ENCODE measurements at regions of chr2 and their contacts with region 1.

Region 1: DNA sequence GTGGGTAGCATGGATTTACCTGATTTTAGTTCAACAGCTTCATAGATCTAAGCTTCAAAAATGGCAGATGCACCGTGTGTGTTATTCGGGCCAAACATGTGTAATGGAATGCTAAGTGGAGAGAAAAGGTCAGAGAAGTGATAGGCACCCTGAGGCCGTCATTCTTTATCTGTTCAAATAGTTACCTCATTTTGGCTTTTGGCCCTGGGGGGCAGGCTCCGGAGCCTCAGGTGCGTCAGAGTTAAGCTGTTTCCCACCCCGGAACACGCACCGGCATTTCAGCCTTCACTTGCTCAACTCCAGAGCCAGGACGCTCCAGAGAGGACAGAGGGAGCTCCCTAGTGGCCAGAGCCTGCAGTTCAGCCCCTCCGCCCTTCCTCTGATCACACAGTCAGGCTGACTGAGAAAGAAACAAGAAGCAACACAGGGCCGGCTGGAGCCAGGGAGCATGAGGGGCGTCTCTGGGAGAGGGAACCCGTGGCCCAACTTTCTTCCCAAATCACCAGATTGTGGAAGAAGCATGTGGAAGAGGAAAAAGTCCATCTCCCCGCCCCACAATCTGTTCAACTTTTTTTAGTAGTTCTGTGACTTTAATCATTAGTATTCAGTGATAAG is 135.2 kb upstream of the EPC2 start:
- DNase-seq: peak; percentile 85
- ATAC-seq: peak; percentile 99

Region 2: DNA sequence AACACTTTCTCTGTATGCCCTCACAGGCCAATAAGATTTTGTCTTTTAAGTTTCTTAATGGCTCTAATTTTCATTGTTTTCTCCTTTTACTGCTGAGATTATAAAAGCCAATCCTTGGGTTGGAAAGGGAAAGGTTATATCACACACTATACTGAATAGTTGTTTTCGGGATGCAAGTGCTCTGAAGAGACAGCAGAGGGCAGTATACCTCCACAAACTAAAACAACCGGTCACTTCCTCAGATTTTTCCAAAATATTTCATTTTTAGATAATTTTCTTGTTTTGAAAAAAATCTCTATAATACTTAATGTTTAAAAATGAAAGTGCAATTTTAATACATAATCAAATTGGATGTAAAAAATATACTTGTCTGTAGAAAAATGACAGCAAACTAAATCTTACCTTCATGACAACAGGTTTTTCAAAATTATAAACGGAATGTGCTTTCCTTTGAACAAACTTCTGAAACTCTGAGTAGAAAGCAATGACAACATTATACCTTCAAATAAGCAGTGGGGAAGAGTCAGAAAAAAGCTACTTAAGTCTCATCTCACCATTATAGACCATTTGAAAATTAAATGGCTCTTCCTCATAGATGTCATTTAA is 571.5 kb before region 1 on chr2:
- intact Hi-C with region 1: loop called in 1 of 2 experiments (anchors 5 kb)
- DNase-seq: no peak
- ATAC-seq: peak; percentile 57 to 72

Region 3: DNA sequence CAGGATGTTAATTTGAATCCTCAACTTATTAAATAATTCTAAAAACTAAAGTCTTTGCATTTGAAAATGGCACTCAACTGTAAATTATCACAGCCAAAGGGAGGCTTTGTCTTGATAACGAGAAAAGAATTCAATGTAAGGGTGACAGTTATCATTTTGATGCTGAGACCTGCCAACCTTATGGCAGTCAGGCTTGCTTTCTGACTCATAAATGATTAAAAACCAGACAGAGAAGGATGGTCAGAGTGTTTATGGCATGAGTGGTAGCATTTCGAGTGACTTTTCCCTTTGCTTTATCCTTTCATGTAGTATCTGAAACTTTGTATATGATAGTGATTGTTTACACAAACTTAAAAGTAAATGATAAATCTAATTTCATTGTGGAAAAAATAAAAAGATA is 81.2 kb after region 1 on chr2:
- intact Hi-C with region 1: no loop called
- DNase-seq: no peak
- ATAC-seq: no peak